Cardiac septum (tissue), 1 donor: ENCODE measurements at regions of chr2 and their contacts with region 1.

Region 1: DNA sequence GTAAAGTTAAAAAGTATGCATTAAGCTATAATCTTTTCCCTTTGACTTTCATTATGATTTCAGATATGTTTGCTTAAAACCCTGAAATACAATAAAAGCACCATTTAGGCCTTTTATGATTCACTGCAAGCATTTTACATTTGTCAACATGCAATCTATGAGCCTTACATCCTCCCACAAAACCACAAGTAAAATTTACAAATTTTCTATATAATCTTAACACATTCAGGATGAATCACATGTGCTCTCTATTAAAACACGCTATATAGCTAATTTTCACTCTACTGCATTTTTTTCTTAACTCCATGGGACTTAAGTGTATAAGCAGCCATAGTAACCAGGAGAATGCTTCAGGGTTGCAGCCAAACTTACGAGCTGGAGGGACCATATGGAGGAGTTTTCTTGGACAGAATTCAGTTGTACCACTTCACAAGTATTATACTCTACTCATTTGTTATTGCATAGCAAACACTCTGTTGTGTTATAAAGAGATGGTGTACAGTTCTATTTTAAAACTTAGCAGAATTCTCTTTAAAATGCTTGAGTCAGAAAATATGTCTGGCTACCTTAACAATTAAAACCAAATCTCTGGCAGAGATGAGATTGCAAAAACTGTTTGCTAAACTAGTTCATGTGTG is 293.2 kb downstream of the ALK start:
- DNase-seq: no peak

Region 2: DNA sequence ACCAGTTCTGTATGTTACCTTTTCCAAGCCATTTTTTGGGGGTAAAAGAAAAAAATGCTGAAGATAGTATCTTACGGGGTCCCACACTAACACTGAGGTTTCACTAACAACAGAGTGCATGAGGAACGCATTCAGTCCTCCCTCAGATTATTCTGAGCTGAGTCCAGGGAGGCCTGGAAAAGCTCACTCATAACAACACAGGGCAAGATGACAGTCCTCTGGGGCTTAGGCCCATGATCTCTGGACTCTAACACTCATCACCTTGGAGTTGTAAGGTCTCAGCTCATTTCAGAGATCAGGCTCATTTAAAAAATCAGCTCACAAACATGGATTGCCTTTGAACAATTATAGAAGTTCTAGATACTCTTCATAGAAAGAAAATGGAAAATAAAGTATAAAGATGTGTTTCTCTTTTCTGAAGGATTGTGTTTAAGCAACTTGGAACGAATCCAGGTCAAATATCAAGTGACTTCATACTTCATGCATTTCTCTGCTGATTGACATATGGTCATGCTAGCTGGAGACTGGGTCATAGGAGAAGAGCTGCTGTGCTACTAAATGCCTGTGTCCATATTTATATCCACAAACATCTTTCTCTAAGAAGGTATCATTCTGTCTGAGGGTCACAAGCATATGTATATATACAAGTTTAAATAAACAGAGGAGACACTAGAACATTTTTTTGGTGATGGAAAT is 27.3 kb after region 1 on chr2:
- intact Hi-C with region 1: loop called (anchors 2 kb)
- DNase-seq: no peak